Caco-2 (cell line): ENCODE measurements at regions of chr1 and their contacts with region 1.

Region 1: GRCh38 chr1:182291584-182292192 is 99.9 kb downstream of the GLUL start:
- DNase-seq: peak in 1 of 2 experiments; percentile 22
- H3K4me3 ChIP-seq: no peak overlapping the region
- H3K4me3 Mint-ChIP-seq: no peak overlapping the region
- H3K27ac Mint-ChIP-seq: peak overlapping the region; percentile 67
- H3K4me1 ChIP-seq: peaks cover 57% of the 10 kb centered on the region
- H3K4me1 Mint-ChIP-seq: peaks cover 47% of the 10 kb centered on the region
- H3K27me3 ChIP-seq: no peaks in the 10 kb centered on the region
- H3K27me3 Mint-ChIP-seq: no peaks in the 10 kb centered on the region
- CTCF ChIP-seq: no peak

Region 2: GRCh38 chr1:182206626-182207239 is 85.0 kb before region 1 on chr1:
- CTCF ChIA-PET with region 1: interaction called, 7 read pairs
- POLR2A ChIA-PET with region 1: no interaction called
- intact Hi-C with region 1: loop called (anchors 5 kb)
- DNase-seq: no peak
- H3K4me3 ChIP-seq: no peak overlapping the region
- H3K4me3 Mint-ChIP-seq: no peak overlapping the region
- H3K27ac Mint-ChIP-seq: no peak overlapping the region
- H3K4me1 ChIP-seq: peaks cover 47% of the 10 kb centered on the region
- H3K4me1 Mint-ChIP-seq: peaks cover 16% of the 10 kb centered on the region
- H3K27me3 ChIP-seq: no peaks in the 10 kb centered on the region
- H3K27me3 Mint-ChIP-seq: no peaks in the 10 kb centered on the region
- CTCF ChIP-seq: no peak

Region 3: DNA sequence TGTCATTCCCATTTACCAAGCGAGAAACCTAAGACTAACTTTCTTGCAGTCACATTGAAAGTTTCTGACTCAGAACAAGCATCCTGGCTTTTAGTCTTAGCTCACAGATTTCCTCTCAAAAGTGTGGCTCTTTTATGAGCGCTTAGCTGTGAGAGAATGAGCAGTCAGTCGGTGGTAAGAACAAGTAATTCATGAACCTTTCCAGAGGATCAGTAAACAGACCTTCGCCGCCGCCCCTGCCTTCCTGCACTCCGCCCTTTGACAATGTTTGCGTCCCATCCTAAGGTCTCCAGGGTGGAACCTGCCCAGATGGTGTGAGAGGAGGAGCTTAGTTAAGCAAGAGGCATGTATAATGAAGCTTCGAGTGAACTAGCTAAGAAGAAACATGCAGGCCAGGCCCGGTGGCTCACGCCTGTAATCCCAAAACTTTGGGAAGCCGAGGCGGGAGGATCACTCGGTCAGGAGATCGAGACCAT is 42.4 kb before region 1 on chr1:
- CTCF ChIA-PET with region 1: no interaction called
- POLR2A ChIA-PET with region 1: no interaction called
- intact Hi-C with region 1: loop called (anchors 5 kb)
- DNase-seq: peak; percentile 80 to 88
- H3K4me3 ChIP-seq: no peak overlapping the region
- H3K4me3 Mint-ChIP-seq: peak overlapping the region; percentile 44
- H3K27ac Mint-ChIP-seq: peak overlapping the region; percentile 59
- H3K4me1 ChIP-seq: peaks cover 25% of the 10 kb centered on the region
- H3K4me1 Mint-ChIP-seq: peaks cover 22% of the 10 kb centered on the region
- H3K27me3 ChIP-seq: no peaks in the 10 kb centered on the region
- H3K27me3 Mint-ChIP-seq: no peaks in the 10 kb centered on the region
- CTCF ChIP-seq: no peak

Region 4: GRCh38 chr1:182309631-182310351 is 18.1 kb after region 1 on chr1:
- CTCF ChIA-PET with region 1: no interaction called
- POLR2A ChIA-PET with region 1: no interaction called
- intact Hi-C with region 1: loop called (anchors 2 kb)
- DNase-seq: peak; percentile 72 to 82
- H3K4me3 ChIP-seq: no peak overlapping the region
- H3K4me3 Mint-ChIP-seq: peak overlapping the region; percentile 52
- H3K27ac Mint-ChIP-seq: peak overlapping the region; percentile 90
- H3K4me1 ChIP-seq: peaks cover 18% of the 10 kb centered on the region
- H3K4me1 Mint-ChIP-seq: peaks cover 22% of the 10 kb centered on the region
- H3K27me3 ChIP-seq: no peaks in the 10 kb centered on the region
- H3K27me3 Mint-ChIP-seq: no peaks in the 10 kb centered on the region
- CTCF ChIP-seq: no peak

Region 5: DNA sequence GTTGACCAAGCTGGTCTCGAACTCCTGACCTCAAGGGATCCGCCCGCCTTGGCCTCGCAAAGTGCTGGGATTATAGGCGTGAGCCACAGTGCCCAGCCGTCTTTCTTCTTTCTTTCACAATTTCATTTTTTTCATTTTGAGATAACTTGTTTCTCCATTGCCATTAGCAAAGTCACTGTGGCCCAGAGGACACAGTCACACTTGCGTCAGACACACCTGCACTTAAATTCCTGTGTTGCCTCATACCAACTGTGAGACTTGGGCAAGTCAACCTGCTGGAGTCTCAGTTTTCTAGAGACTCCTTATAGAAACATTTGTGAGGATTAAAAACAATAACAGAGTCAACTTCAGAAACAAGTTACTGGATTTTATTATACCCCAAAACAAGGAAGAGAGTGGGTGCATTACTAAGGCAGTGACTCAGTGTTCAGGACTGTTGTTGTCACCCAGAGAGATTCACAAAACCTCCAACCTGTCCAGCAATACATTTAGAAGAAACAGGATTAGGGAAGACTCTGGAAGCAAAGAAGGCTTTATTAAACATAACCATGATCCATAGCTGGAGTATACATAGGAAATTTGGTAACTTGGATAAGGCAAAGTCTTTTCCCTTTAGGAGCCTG is 106.2 kb after region 1 on chr1:
- CTCF ChIA-PET with region 1: interaction called, 5 read pairs
- POLR2A ChIA-PET with region 1: no interaction called
- intact Hi-C with region 1: loop called (anchors 2 kb)
- DNase-seq: peak in 1 of 2 experiments; percentile 34
- H3K4me3 ChIP-seq: no peak overlapping the region
- H3K4me3 Mint-ChIP-seq: no peak overlapping the region
- H3K27ac Mint-ChIP-seq: peak overlapping the region; percentile 62
- H3K4me1 ChIP-seq: peaks cover 23% of the 10 kb centered on the region
- H3K4me1 Mint-ChIP-seq: peaks cover 35% of the 10 kb centered on the region
- H3K27me3 ChIP-seq: no peaks in the 10 kb centered on the region
- H3K27me3 Mint-ChIP-seq: no peaks in the 10 kb centered on the region
- CTCF ChIP-seq: no peak